Lower leg skin (tissue), 4 donors: ENCODE measurements at regions of chr19 and their contacts with region 1.

Region 1: GRCh38 chr19:13861732-13862531 is 15.0 kb upstream of the NANOS3 start:
- DNase-seq: peak; percentile 92 to 99
- H3K4me3 ChIP-seq: peak overlapping the region; percentile 0
- CTCF ChIP-seq: peak in 2 of 3 donors; percentile 95 to 99
- POLR2A ChIP-seq: peak in 1 of 2 donors; percentile 7

Region 2: GRCh38 chr19:13597640-13598039 is 264.3 kb before region 1 on chr19:
- intact Hi-C with region 1: loop called (anchors 5 kb)
- DNase-seq: peak in 1 of 2 donors; percentile 27
- H3K4me3 ChIP-seq: no peak overlapping the region
- CTCF ChIP-seq: no peak
- POLR2A ChIP-seq: no peak

Region 3: GRCh38 chr19:13784731-13785452 is 77.0 kb before region 1 on chr19:
- intact Hi-C with region 1: loop called (anchors 2 kb)
- DNase-seq: peak; percentile 53 to 95
- H3K4me3 ChIP-seq: no peak overlapping the region
- CTCF ChIP-seq: no peak
- POLR2A ChIP-seq: no peak

Region 4: GRCh38 chr19:14505488-14506432 is 643.8 kb after region 1 on chr19:
- intact Hi-C with region 1: no loop called
- DNase-seq: peak; percentile 54 to 90
- H3K4me3 ChIP-seq: no peak overlapping the region
- CTCF ChIP-seq: no peak
- POLR2A ChIP-seq: no peak

Region 5: GRCh38 chr19:15850385-15850784 is 1988.5 kb after region 1 on chr19:
- intact Hi-C with region 1: loop called (anchors 5 kb)
- DNase-seq: no peak
- H3K4me3 ChIP-seq: no peak overlapping the region
- CTCF ChIP-seq: no peak
- POLR2A ChIP-seq: no peak